ENCODE measurements at regions of chr17 and their contacts with region 1.

Region 1: GRCh38 chr17:75046582-75047289 is at the starts of genes ATP5PD and KCTD2:
- DNase-seq: peak; percentile 96
- H3K4me3 ChIP-seq: peak within 1 kb of the TSS; percentile 98 to 100 (median 100)
- H3K27ac ChIP-seq: peak within 1 kb of the TSS; percentile 88
- H3K4me1 ChIP-seq: peaks cover 9% of the 10 kb centered on the region
- H3K27me3 ChIP-seq: no peaks in the 10 kb centered on the region
- CTCF ChIP-seq: no peak
- total RNA-seq, gene ATP5PD: 142 to 269 TPM
- total RNA-seq, gene KCTD2: 13.7 to 20.5 TPM

Region 2: DNA sequence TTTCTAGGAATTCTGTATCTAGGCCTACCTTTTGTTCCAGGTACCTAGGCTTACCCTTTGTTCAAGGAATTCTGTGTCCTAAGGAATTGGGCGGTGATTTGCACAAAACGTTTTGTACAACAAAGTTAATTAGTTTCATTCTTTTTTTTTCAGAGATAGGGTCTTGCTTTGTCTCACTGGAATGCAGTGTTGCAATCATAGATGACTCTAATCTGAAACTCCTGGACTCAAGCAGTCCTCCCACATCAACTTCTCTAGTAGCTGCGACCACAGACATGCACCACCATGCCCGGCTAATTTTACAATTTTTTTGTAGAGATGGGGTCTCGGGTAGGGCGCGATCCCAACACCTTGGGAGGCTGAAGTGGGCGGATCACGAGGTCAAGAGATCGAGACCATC is 52.3 kb before region 1 on chr17:
- CTCF ChIA-PET with region 1: no interaction called
- dilution Hi-C with region 1: no loop called
- in situ Hi-C with region 1: no loop called
- intact Hi-C with region 1: loop called (anchors 5 kb)
- DNase-seq: peak; percentile 77
- H3K4me3 ChIP-seq: no peak overlapping the region
- H3K27ac ChIP-seq: peak overlapping the region; percentile 91
- H3K4me1 ChIP-seq: peaks cover 58% of the 10 kb centered on the region
- H3K27me3 ChIP-seq: no peaks in the 10 kb centered on the region
- CTCF ChIP-seq: no peak

Region 3: GRCh38 chr17:75012346-75013091 is 34.2 kb before region 1 on chr17 and contains the start of gene MRPL58:
- CTCF ChIA-PET with region 1: no interaction called
- dilution Hi-C with region 1: no loop called
- in situ Hi-C with region 1: no loop called
- intact Hi-C with region 1: loop called (anchors 1 kb)
- DNase-seq: peak; percentile 79
- H3K4me3 ChIP-seq: peak within 1 kb of the TSS; percentile 75 to 86 (median 83)
- H3K27ac ChIP-seq: peak within 1 kb of the TSS; percentile 79
- H3K4me1 ChIP-seq: peaks cover 19% of the 10 kb centered on the region
- H3K27me3 ChIP-seq: no peaks in the 10 kb centered on the region
- CTCF ChIP-seq: peak; percentile 13 to 67
- total RNA-seq, gene MRPL58: 22.2 to 43.2 TPM

Region 4: GRCh38 chr17:75034236-75034908 is 12.4 kb before region 1 on chr17:
- CTCF ChIA-PET with region 1: interaction called, 3 read pairs
- dilution Hi-C with region 1: no loop called
- in situ Hi-C with region 1: no loop called
- intact Hi-C with region 1: loop called (anchors 1 kb)
- DNase-seq: peak; percentile 91
- H3K4me3 ChIP-seq: peak overlapping the region; percentile 57 to 85 (median 65)
- H3K27ac ChIP-seq: peak overlapping the region; percentile 86
- H3K4me1 ChIP-seq: peaks cover 15% of the 10 kb centered on the region
- H3K27me3 ChIP-seq: no peaks in the 10 kb centered on the region
- CTCF ChIP-seq: peak in 1 of 2 donors; percentile 36

Region 5: GRCh38 chr17:75096082-75096625 is 49.4 kb after region 1 on chr17:
- CTCF ChIA-PET with region 1: no interaction called
- dilution Hi-C with region 1: no loop called
- in situ Hi-C with region 1: no loop called
- intact Hi-C with region 1: no loop called
- DNase-seq: peak; percentile 99
- H3K4me3 ChIP-seq: no peak overlapping the region
- H3K27ac ChIP-seq: peak overlapping the region; percentile 35
- H3K4me1 ChIP-seq: peaks cover 17% of the 10 kb centered on the region
- H3K27me3 ChIP-seq: no peaks in the 10 kb centered on the region
- CTCF ChIP-seq: no peak

Region 6: GRCh38 chr17:75131280-75132017 is 84.7 kb after region 1 on chr17 and contains the start of gene NT5C:
- CTCF ChIA-PET with region 1: no interaction called
- dilution Hi-C with region 1: loop called (anchors 5 kb)
- in situ Hi-C with region 1: no loop called
- intact Hi-C with region 1: no loop called
- DNase-seq: peak; percentile 69
- H3K4me3 ChIP-seq: peak within 1 kb of the TSS; percentile 72 to 97 (median 87)
- H3K27ac ChIP-seq: peak within 1 kb of the TSS; percentile 67
- H3K4me1 ChIP-seq: peaks cover 25% of the 10 kb centered on the region
- H3K27me3 ChIP-seq: no peaks in the 10 kb centered on the region
- CTCF ChIP-seq: peak; percentile 26 to 69
- total RNA-seq, gene NT5C: 45.7 to 65.7 TPM

Region 7: GRCh38 chr17:75182569-75183450 is 136.1 kb after region 1 on chr17 and contains the start of gene SUMO2:
- CTCF ChIA-PET with region 1: no interaction called
- dilution Hi-C with region 1: no loop called
- in situ Hi-C with region 1: no loop called
- intact Hi-C with region 1: loop called (anchors 5 kb)
- DNase-seq: peak; percentile 92
- H3K4me3 ChIP-seq: peak within 1 kb of the TSS; percentile 59 to 97 (median 76)
- H3K27ac ChIP-seq: peak within 1 kb of the TSS; percentile 83
- H3K4me1 ChIP-seq: peaks cover 10% of the 10 kb centered on the region
- H3K27me3 ChIP-seq: no peaks in the 10 kb centered on the region
- CTCF ChIP-seq: peak in 1 of 2 donors; percentile 45
- total RNA-seq, gene SUMO2: 49.7 to 279 TPM

Region 8: DNA sequence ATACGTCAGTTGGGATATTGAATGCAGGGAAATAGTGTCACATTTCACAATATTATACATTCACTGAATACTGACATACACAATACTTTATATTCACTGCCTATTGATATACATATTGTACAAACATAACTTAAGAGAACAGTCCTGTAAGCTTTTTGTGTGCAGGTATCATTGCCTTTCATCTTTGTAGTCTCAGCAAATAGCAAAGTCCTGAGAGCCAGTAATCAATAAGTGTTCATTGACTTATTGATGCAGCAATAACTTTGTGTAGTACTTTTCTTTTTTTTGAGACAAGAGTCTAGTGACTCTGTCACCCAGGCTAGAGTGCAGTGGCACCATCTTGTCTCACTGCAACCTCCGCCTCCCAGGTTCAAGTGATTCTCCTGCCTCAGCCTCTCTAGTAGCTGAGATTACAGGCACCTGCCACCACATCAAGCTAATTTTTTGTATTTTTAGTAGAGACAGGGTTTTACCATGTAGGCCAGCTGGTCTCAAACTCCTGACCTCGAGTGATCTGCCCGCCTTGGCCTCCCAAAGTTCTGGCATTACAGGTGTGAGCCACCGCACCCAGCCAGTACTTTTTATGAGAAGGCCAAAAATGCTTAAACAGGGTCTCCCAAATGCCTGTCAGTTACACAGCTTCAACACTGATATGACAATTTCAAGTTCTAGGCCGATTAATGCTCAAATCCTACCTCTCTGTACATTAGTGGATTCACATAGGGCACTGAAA is 153.3 kb after region 1 on chr17:
- CTCF ChIA-PET with region 1: interaction called, 5 read pairs
- dilution Hi-C with region 1: no loop called
- in situ Hi-C with region 1: no loop called
- intact Hi-C with region 1: loop called (anchors 5 kb)
- DNase-seq: no peak
- H3K4me3 ChIP-seq: no peak overlapping the region
- H3K27ac ChIP-seq: no peak overlapping the region
- H3K4me1 ChIP-seq: no peaks in the 10 kb centered on the region
- H3K27me3 ChIP-seq: no peaks in the 10 kb centered on the region
- CTCF ChIP-seq: no peak

Measured in mammary epithelial cell (primary cell).